Pancreas (tissue), 10 donors: ENCODE measurements at regions of chr20 and their contacts with region 1.

Region 1: GRCh38 chr20:35511814-35512420 is 17.5 kb downstream of the C20orf173 start:
- DNase-seq: no peak
- ATAC-seq: peak in 3 of 4 donors; percentile 44 to 71 (median 69)
- H3K4me3 ChIP-seq: no peak overlapping the region
- H3K27ac ChIP-seq: no peak overlapping the region
- H3K4me1 ChIP-seq: no peaks in the 10 kb centered on the region
- H3K27me3 ChIP-seq: no peaks in the 10 kb centered on the region
- CTCF ChIP-seq: peak in 1 of 4 donors; percentile 29

Region 2: DNA sequence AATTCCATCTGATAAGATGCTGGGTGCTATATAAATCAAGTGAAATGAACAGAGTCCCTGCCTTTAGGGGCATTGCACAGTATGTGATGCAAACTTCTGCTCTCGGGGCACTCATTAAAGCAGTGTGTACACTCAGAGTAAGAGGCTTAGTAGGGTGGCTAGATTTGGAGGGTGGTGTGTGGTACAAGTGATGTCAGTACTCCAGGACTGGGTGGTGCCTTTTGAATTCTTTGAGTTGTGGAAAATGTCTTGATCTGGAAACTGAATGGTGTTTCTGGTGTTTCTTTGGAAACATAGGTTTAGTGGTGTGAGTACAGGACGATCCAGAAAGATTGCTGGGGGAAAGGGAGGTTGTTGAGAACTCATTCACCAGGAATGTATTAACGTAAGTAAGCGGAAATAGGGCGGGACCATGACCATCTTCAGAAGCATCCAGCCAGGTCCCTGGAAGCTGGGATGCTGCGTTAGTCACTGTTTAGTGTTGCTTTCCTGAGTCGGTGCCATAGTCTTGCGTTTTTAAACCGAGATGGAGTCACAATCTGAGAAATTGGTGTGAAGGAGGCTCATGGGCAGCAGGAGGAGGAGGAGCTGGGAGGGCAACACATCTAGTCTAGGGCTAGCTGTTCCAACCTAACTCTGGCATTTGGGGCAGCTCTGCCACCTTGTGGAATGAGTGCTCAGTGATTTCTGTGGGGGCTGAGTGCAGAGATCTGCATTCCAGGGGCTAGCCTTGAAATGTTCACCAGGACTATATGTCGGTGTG is 372.0 kb after region 1 on chr20:
- intact Hi-C with region 1: loop called in 1 of 3 experiments (anchors 5 kb)
- DNase-seq: peak; percentile 37 to 64 (median 52)
- ATAC-seq: peak; percentile 86 to 99 (median 95)
- H3K4me3 ChIP-seq: no peak overlapping the region
- H3K27ac ChIP-seq: no peak overlapping the region
- H3K4me1 ChIP-seq: no peaks in the 10 kb centered on the region
- H3K27me3 ChIP-seq: no peaks in the 10 kb centered on the region
- CTCF ChIP-seq: peak in 3 of 4 donors; percentile 42 to 53 (median 46)